CD8-positive, alpha-beta T cell (primary cell): ENCODE measurements at regions of chr1 and their contacts with region 1.

Region 1: DNA sequence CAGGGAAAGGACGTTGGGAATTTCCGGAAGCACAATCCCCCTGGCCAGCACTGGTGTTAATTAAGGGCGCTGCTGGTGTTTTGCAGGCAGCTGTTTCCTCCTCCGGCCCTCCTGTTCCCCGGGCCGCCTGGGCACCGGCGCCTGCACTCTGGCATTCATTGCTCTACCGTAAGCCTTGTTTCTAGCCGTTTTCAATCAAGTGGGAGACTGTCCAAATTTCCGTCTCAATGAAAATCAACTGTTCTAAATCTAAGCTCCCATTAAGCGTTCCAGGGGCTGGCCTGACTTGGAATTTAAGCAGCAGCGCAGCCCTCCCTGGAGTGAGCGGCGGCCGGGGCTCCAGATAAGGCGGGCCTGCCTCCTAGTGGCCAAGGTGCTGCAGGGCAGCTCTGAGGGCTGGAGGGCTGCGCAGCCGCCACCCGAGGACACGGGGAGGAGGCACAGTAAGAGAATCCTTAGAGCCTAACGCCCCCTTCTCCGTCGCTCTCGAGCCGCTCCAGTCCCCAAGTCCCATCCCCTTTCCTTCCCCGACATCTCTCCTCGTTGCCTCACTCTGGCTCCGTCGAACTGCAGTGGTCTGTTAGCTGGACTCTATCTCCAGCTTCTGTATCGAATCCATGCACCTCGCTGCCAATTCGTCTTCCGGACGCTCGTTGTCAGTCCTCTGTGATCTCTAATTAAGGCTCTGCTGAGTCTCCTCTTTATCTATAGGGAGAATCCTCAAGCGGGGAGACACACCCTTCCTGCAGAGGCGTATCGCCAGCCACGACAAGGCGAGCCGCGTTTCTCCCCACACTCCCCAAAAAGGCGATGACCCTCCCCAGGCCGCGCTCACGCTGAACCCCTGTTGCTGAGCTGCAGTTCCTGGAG is 57.8 kb upstream of the LRRC8D start:
- DNase-seq: peak; percentile 80 to 93 (median 88)
- ATAC-seq: peak; percentile 100
- H3K4me3 ChIP-seq: peak overlapping the region; percentile 54 to 59
- H3K4me3 Mint-ChIP-seq: peak overlapping the region; percentile 89
- H3K27ac ChIP-seq: peak overlapping the region; percentile 27 to 46
- H3K27ac Mint-ChIP-seq: peak overlapping the region; percentile 91
- H3K4me1 ChIP-seq: peaks cover 38% of the 10 kb centered on the region
- H3K4me1 Mint-ChIP-seq: peaks cover 50% of the 10 kb centered on the region
- H3K27me3 ChIP-seq: no peaks in the 10 kb centered on the region
- H3K27me3 Mint-ChIP-seq: no peaks in the 10 kb centered on the region
- CTCF ChIP-seq: peak; percentile 84

Region 2: DNA sequence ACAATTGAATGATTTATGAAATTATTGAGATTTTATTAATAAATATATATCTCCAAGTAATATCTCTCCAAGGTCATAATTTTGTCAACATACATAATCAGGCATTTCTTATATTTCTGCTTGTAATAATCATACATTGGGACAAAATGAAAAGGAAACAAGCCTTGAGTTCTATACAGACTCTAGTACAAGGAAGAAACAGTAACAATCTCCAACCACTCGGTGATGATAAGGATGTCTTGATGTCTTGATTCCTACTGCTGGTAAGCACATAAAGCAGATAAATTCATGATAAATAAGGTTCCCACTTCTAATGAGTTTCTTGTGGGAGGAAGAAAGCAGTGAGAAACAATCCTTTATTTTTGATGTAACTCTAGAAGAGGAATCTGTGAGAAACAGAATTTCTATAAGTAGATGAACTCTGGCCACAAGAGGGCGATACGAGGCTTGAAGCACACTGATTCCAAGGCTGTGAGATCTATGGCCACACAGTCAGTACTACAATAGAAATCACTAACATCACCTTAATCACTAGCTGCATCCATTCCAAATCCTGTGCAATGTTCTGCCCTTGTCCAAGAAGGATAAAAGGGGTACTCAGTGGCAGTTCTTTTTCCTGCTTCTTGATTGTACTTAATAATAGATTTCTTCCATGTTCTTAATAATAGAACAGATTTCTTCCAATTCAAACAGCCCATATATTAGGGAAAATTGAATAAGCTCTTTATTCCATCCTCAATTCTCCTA is 279.8 kb before region 1 on chr1:
- CTCF ChIA-PET with region 1: interaction called, 37 read pairs
- POLR2A ChIA-PET with region 1: interaction called, 3 read pairs
- intact Hi-C with region 1: loop called (anchors 1 kb)
- DNase-seq: peak; percentile 48 to 85 (median 79)
- ATAC-seq: peak; percentile 92
- H3K4me3 ChIP-seq: no peak overlapping the region
- H3K4me3 Mint-ChIP-seq: no peak overlapping the region
- H3K27ac ChIP-seq: no peak overlapping the region
- H3K27ac Mint-ChIP-seq: no peak overlapping the region
- H3K4me1 ChIP-seq: no peaks in the 10 kb centered on the region
- H3K4me1 Mint-ChIP-seq: peaks cover 9% of the 10 kb centered on the region
- H3K27me3 ChIP-seq: no peaks in the 10 kb centered on the region
- H3K27me3 Mint-ChIP-seq: peaks cover 4% of the 10 kb centered on the region
- CTCF ChIP-seq: peak; percentile 72

Region 3: DNA sequence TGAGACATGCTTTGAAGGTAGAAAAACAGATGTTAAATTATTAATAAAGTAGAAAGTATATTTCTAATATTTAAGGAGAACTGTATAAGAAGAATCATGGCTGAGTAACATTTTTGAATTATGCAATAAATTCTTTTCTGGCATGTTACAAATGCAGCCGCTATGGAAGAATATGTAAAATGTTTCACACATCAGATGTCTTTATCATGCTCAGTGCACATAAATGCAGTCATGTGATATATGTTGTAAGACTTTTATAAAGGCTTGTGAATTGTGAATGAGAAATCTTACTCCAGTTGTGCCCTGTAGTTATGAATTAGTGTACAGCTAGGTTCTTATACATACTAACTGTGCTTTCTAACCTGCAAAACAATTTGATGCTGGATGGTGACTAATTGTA is 184.9 kb before region 1 on chr1:
- CTCF ChIA-PET with region 1: interaction called, 34 read pairs
- POLR2A ChIA-PET with region 1: interaction called, 3 read pairs
- intact Hi-C with region 1: loop called (anchors 5 kb)
- DNase-seq: no peak
- ATAC-seq: no peak
- H3K4me3 ChIP-seq: no peak overlapping the region
- H3K4me3 Mint-ChIP-seq: no peak overlapping the region
- H3K27ac ChIP-seq: no peak overlapping the region
- H3K27ac Mint-ChIP-seq: no peak overlapping the region
- H3K4me1 ChIP-seq: no peaks in the 10 kb centered on the region
- H3K4me1 Mint-ChIP-seq: peaks cover 7% of the 10 kb centered on the region
- H3K27me3 ChIP-seq: no peaks in the 10 kb centered on the region
- H3K27me3 Mint-ChIP-seq: no peaks in the 10 kb centered on the region
- CTCF ChIP-seq: no peak

Region 4: GRCh38 chr1:89615676-89616598 is 147.1 kb before region 1 on chr1:
- CTCF ChIA-PET with region 1: interaction called, 48 read pairs
- POLR2A ChIA-PET with region 1: interaction called, 14 read pairs
- intact Hi-C with region 1: loop called in 1 of 2 experiments (anchors 1 kb)
- DNase-seq: peak in 3 of 9 experiments; percentile 27 to 59 (median 49)
- ATAC-seq: no peak
- H3K4me3 ChIP-seq: no peak overlapping the region
- H3K4me3 Mint-ChIP-seq: no peak overlapping the region
- H3K27ac ChIP-seq: no peak overlapping the region
- H3K27ac Mint-ChIP-seq: no peak overlapping the region
- H3K4me1 ChIP-seq: peaks cover 43% of the 10 kb centered on the region
- H3K4me1 Mint-ChIP-seq: peaks cover 73% of the 10 kb centered on the region
- H3K27me3 ChIP-seq: no peaks in the 10 kb centered on the region
- H3K27me3 Mint-ChIP-seq: no peaks in the 10 kb centered on the region
- CTCF ChIP-seq: no peak

Region 5: GRCh38 chr1:89671775-89672488 is 91.1 kb before region 1 on chr1:
- CTCF ChIA-PET with region 1: interaction called, 11 read pairs
- POLR2A ChIA-PET with region 1: interaction called, 3 read pairs
- intact Hi-C with region 1: no loop called
- DNase-seq: no peak
- ATAC-seq: no peak
- H3K4me3 ChIP-seq: no peak overlapping the region
- H3K4me3 Mint-ChIP-seq: no peak overlapping the region
- H3K27ac ChIP-seq: no peak overlapping the region
- H3K27ac Mint-ChIP-seq: peak overlapping the region; percentile 23
- H3K4me1 ChIP-seq: peaks cover 83% of the 10 kb centered on the region
- H3K4me1 Mint-ChIP-seq: peaks cover 90% of the 10 kb centered on the region
- H3K27me3 ChIP-seq: no peaks in the 10 kb centered on the region
- H3K27me3 Mint-ChIP-seq: no peaks in the 10 kb centered on the region
- CTCF ChIP-seq: no peak

Region 6: DNA sequence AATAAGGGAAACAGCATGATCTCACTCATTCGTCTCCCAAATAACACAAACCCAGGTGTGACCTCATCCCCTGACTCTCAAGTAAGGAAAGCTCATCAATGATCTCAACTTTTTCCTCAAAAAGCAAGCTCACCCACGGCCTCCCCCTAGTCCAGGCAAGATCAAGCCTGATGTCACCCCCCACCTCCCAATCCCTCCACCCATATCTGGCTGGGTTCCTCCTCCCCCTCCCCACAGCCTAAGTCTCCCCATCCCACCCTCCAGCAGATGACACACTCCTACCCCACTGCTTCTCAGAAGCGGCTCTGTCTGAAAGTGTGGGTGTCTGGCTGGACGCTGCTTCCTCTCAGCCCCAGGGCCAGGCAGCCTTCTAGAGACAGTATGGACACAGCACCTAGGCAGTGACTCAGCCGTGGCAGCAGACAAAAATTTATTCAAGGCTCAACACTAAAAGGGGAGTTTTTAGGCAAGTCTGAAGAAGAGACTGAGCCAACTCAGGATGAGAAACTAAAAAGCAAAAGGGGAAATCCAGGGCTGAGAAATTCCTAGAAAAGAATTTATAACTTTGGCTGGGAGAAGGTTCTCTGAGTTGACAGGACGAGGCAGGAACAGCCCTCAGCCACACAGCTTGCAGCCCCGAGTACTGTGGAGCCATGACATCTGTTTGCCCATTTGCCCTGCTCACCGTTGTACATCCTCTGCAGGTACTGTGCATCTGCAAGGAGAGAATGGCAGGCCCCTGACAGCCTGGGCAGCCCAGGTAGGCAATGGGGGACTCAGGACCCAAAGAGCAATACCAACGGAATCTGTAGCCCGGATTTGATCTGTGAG is 23.8 kb before region 1 on chr1:
- CTCF ChIA-PET with region 1: interaction called, 15 read pairs
- POLR2A ChIA-PET with region 1: interaction called, 5 read pairs
- intact Hi-C with region 1: no loop called
- DNase-seq: peak in 2 of 9 experiments; percentile 43 to 51
- ATAC-seq: peak; percentile 56
- H3K4me3 ChIP-seq: no peak overlapping the region
- H3K4me3 Mint-ChIP-seq: peak overlapping the region; percentile 13
- H3K27ac ChIP-seq: peak overlapping the region in 1 of 2 experiments; percentile 58
- H3K27ac Mint-ChIP-seq: peak overlapping the region; percentile 77
- H3K4me1 ChIP-seq: peaks cover 14% of the 10 kb centered on the region
- H3K4me1 Mint-ChIP-seq: peaks cover 35% of the 10 kb centered on the region
- H3K27me3 ChIP-seq: no peaks in the 10 kb centered on the region
- H3K27me3 Mint-ChIP-seq: no peaks in the 10 kb centered on the region
- CTCF ChIP-seq: no peak